Activated naive CD4-positive, alpha-beta T cell treated with anti-CD3 and anti-CD28 coated beads, Interleukin-2, amount 10 ng/mL, durations not matched to agents 7 days and 5 days (primary cell): ENCODE measurements at regions of chr20 and their contacts with region 1.

Region 1: GRCh38 chr20:44129911-44130718 is 56.9 kb downstream of the JPH2 start:
- DNase-seq: no peak
- H3K4me3 Mint-ChIP-seq: no peak overlapping the region
- H3K27ac Mint-ChIP-seq: no peak overlapping the region
- H3K4me1 Mint-ChIP-seq: no peaks in the 10 kb centered on the region
- H3K27me3 Mint-ChIP-seq: peaks cover 21% of the 10 kb centered on the region

Region 2: DNA sequence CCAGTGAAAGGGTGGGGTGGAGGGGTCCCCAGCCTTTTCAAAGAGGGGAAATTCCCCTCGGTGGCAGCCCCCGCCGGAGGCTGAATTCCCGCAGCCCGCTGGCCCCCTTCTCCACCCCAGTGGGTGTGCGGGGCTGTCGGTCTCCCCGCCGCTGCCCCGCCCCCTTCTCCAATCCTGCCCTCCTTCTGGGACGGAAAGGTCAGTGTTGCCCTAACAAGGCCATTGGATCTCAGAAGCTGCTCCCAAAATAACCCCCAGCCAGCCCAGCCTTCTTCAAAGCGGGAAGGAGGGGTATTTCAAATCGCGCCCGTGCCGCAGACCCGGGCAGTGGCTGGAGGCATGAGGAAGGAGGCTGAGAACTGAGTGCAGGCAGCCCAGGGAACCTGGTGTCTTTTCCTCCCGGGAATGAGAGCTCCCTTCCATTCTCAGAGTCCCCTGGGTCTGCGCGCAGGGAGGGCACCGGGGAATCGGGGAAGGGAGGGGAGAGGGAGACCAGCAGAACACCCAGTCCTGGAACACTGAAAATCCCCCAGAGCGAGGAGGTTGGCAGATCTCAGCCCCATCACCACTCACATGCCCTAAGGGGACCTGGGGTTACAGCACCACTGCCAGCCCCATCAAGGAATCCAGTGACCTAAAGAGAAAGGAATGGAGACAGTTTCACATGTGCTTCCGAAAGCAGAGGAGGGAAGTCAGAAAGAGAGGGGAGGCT is 57.1 kb after region 1 on chr20 and contains the start of gene JPH2:
- CTCF ChIA-PET with region 1: interaction called, 11 read pairs
- DNase-seq: no peak
- H3K4me3 Mint-ChIP-seq: no peak within 1 kb of the TSS
- H3K27ac Mint-ChIP-seq: no peak within 1 kb of the TSS
- H3K4me1 Mint-ChIP-seq: peaks cover 4% of the 10 kb centered on the region
- H3K27me3 Mint-ChIP-seq: peaks cover 67% of the 10 kb centered on the region

Region 3: DNA sequence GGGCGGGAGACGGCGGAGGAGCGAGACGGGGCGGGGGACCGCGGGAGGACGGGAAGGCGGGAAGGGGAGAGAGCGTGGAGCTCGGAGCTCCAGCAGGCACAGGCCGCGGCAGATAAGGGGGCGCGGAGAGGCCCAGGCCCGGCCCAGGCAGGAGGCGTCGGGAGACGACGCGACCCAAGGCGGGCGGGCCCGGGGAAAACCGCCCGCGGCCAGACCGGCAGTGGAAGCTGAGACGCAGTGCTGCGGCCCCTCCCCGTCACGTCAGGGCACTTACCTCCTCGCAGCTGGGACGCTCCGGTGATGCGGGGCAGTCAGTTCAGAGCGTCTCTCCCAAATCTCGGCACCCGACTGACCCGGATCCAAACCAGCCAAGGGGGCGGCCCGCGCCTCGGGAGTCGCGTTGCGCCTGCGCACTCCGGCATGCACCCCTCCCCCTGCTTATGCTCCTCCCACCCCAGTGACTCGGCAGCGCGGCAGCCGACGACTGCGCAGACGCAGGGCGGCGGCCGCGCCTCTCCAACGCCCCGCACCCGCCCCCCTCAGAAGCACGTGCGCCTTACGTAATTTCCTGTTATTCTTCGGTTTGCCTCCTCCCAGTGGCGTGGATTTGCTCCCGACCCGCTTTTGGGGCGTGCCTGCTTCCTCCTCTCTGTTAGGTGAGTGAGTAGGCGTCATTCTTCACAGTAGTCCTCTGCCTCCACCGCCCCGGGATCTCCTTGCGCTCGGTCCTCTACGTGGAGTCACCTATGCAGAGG is 80.5 kb after region 1 on chr20 and contains the start of gene OSER1:
- CTCF ChIA-PET with region 1: no interaction called
- DNase-seq: peak; percentile 99
- H3K4me3 Mint-ChIP-seq: peak within 1 kb of the TSS; percentile 82
- H3K27ac Mint-ChIP-seq: peak within 1 kb of the TSS; percentile 98
- H3K4me1 Mint-ChIP-seq: peaks cover 54% of the 10 kb centered on the region
- H3K27me3 Mint-ChIP-seq: peaks cover 6% of the 10 kb centered on the region